Pancreas (tissue), 10 donors: ENCODE measurements at regions of chr3 and their contacts with region 1.

Region 1: DNA sequence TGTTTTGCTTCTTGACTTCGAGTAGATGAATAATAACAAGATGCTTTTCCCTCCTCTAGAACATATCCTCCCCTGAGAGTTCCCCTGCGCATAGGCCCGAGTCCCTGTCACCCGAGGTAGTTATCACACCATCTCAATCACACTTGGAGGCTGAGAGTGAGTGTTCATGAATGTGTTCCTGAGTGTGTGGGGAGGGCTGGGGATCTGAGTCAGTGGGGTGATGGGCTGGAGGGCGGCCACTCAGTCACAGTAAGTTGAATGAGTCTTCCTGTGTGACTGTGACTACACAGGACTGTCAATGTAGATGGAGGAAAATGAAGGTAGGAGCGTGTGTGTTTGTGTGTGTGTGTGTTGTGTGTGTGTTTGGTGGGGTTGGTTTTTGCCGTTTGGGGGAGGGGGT is 71.0 kb downstream of the SETD5 start:
- DNase-seq: no peak
- ATAC-seq: no peak
- H3K4me3 ChIP-seq: no peak overlapping the region
- H3K27ac ChIP-seq: no peak overlapping the region
- H3K4me1 ChIP-seq: no peaks in the 10 kb centered on the region
- H3K27me3 ChIP-seq: no peaks in the 10 kb centered on the region
- CTCF ChIP-seq: no peak

Region 2: DNA sequence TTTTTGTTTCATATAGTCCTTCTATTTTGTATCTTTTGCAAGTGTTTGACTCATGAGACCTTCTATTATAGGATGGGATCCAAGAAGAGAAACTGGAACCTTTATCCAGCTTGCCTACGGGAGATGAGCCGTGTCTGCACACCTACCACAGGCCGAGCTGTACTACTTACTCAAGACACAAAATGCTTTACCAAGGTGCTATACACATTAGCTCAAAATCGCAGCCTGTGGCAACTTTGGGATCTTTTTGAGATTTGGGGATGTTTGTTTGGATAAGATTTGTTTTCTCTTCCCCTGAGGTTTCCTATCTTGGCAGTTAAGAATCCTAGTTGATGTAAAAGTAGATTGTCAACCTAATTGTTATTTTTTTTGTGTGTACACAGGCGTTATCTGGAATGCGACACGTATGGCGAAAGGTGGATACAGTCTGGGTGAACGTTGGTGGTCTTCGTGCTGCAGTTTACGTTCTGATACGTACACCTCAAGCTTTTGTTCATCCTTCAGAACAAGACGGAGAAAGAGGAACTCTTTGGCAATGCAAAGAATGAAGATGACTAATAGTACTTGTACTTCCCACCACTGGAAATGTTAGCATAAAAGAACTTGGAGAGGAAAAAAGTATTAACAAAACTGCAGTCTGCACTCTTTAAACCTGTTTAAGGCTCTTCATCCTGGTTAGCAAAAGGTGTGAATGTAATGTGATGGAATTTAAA is 84.2 kb before region 1 on chr3:
- intact Hi-C with region 1: loop called in 1 of 3 experiments (anchors 10 kb)
- DNase-seq: no peak
- ATAC-seq: no peak
- H3K4me3 ChIP-seq: no peak overlapping the region
- H3K27ac ChIP-seq: no peak overlapping the region
- H3K4me1 ChIP-seq: no peaks in the 10 kb centered on the region
- H3K27me3 ChIP-seq: no peaks in the 10 kb centered on the region
- CTCF ChIP-seq: no peak

Region 3: DNA sequence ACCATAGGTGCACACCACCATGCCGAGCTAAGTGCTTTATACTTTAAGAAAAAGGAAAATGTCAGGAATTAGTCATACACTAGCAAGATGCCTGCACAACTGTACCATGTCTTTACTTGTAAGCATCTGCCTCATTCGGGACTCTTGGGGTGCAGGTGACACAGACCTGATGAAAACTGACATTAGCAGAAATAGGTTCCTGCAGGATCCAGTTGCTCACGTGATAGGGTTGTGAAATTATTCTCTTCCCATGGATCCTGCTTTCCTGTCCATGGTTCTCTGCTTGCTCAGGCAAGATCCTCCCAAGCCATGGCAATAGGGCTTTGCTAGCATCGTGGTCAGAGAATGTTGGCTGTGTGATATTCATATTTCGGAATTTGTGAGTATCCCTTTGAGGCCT is 95.4 kb after region 1 on chr3:
- intact Hi-C with region 1: no loop called
- DNase-seq: no peak
- ATAC-seq: no peak
- H3K4me3 ChIP-seq: no peak overlapping the region
- H3K27ac ChIP-seq: no peak overlapping the region
- H3K4me1 ChIP-seq: no peaks in the 10 kb centered on the region
- H3K27me3 ChIP-seq: no peaks in the 10 kb centered on the region
- CTCF ChIP-seq: no peak